Breast epithelium (tissue), 4 donors: ENCODE measurements at regions of chr10 and their contacts with region 1.

Region 1: GRCh38 chr10:60099998-60100747 is 193.8 kb upstream of the CCDC6 start:
- DNase-seq: no peak
- H3K4me3 ChIP-seq: no peak overlapping the region
- H3K27ac ChIP-seq: no peak overlapping the region
- H3K4me1 ChIP-seq: no peaks in the 10 kb centered on the region
- H3K27me3 ChIP-seq: no peaks in the 10 kb centered on the region
- CTCF ChIP-seq: peak; percentile 28 to 56 (median 50)
- POLR2A ChIP-seq: no peak

Region 2: GRCh38 chr10:59934701-59935100 is 165.5 kb before region 1 on chr10:
- intact Hi-C with region 1: no loop called
- DNase-seq: no peak
- H3K4me3 ChIP-seq: no peak overlapping the region
- H3K27ac ChIP-seq: no peak overlapping the region
- H3K4me1 ChIP-seq: no peaks in the 10 kb centered on the region
- H3K27me3 ChIP-seq: no peaks in the 10 kb centered on the region
- CTCF ChIP-seq: no peak
- POLR2A ChIP-seq: no peak

Region 3: DNA sequence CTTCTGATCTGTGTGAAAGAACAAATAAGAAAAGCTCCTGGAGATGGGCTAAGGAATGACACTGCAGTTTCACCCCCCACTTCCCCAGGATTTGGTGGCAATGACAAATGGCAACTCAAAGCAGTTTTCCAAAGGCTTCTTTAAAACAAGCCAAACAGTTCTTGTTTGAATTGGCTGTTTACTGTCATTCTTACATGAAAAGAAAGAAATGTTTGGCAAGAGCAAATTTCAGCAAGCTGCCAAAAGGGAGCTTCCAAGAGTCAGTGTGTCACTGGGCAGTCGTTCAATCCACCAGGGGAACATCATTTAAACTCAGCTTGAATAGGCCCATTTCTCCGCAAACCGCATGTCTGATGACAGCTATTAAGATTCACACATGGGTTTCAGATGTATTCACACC is 962.9 kb after region 1 on chr10:
- intact Hi-C with region 1: loop called (anchors 5 kb)
- DNase-seq: no peak
- H3K4me3 ChIP-seq: no peak overlapping the region
- H3K27ac ChIP-seq: no peak overlapping the region
- H3K4me1 ChIP-seq: no peaks in the 10 kb centered on the region
- H3K27me3 ChIP-seq: no peaks in the 10 kb centered on the region
- CTCF ChIP-seq: no peak
- POLR2A ChIP-seq: no peak